Gastrocnemius medialis (tissue), 4 donors: ENCODE measurements at regions of chr3 and their contacts with region 1.

Region 1: DNA sequence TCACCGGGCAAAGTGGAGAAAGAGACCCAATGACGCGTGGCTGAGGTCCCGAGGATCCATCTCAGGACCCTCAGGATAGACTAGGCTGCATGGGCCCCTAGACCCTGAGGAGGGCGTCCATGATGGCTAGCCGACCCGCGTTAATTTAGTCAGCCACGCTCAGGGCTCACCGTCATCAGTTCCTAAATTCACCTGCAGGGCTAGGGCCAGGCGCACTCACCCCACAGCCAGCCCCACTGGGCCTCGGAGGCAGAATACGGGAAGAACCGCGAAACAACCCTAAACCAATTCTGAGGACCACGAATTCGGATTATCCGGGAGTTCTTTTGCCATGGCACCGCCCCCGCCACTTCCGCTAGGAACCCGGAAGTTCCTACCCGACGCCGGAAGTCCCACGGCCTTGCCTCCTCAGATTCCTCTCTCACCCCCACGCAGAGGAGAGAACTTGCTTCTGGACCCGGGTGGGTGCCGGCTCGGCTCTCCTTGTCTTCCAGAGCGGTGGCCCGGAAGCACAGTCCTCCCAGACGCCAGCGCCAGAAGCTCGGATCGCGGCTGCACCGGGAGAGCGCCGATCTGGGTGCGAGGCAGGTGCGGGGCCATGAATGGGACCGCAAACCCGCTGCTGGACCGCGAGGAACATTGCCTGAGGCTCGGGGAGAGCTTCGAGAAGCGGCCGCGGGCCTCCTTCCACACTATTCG is at the starts of genes EAF1 and METTL6:
- DNase-seq: peak; percentile 64 to 72
- ATAC-seq: peak; percentile 90 to 94
- H3K4me3 ChIP-seq: peak within 1 kb of the TSS; percentile 80 to 100 (median 90)
- H3K27ac ChIP-seq: peak within 1 kb of the TSS; percentile 85 to 88 (median 87)
- H3K4me1 ChIP-seq: peaks cover 33 to 40% of the 10 kb centered on the region in 2 donors
- H3K27me3 ChIP-seq: no peaks in the 10 kb centered on the region
- CTCF ChIP-seq: peak in 4 of 5 experiments; percentile 20 to 49 (median 48)
- POLR2A ChIP-seq: peak; percentile 25 to 43
- total RNA-seq, gene EAF1: 9.4 to 17.3 (median 10.5) TPM
- total RNA-seq, gene METTL6: 6.8 to 22.0 (median 7.8) TPM

Region 2: GRCh38 chr3:15562560-15562959 is 135.2 kb after region 1 on chr3:
- in situ Hi-C with region 1: loop called (anchors 5 to 25 kb)
- intact Hi-C with region 1: loop called (anchors 1 kb)
- DNase-seq: no peak
- ATAC-seq: no peak
- H3K4me3 ChIP-seq: no peak overlapping the region
- H3K27ac ChIP-seq: no peak overlapping the region
- H3K4me1 ChIP-seq: peaks cover 0 to 3% of the 10 kb centered on the region in 2 donors
- H3K27me3 ChIP-seq: no peaks in the 10 kb centered on the region
- CTCF ChIP-seq: no peak
- POLR2A ChIP-seq: no peak